ENCODE measurements at regions of chr3 and their contacts with region 1.

Region 1: DNA sequence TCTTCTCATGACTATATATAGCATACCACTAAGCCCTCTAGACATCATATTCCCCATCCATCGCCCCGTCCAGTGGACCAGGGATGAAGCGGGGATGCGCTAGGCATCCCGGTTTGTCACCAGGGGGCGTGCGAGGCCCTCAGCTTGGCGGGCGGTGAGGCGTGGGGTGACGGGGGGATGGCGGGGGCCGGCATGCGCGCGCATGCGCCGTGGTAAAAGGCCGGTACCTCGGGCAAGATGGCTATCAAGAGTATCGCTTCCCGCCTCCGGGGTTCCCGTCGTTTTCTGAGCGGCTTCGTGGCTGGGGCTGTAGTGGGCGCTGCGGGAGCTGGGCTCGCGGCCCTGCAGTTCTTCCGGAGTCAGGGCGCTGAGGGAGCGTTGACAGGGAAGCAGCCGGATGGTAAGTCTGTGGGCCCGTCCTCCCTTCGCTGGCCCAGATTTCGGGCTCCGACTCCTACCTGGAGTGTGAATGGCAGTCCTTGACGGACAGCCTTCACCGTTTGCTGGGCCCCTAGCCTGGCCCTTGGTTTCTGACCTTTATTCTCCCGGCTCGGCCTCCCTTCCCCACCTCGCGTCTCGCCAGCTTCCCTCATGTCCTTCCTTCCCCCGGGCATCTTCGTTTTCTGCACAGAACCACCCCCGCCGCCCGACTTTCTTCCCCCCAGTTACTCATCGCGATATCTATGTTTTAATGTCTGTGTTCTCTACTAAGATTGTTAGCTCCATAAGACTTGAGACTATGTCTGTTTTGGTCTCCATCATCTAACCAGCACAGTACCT is at the start of gene EXOG:
- DNase-seq: peak; percentile 94
- ATAC-seq: peak; percentile 89
- total RNA-seq, gene EXOG: 26.0 TPM

Region 2: GRCh38 chr3:38054291-38055001 is 441.9 kb before region 1 on chr3:
- intact Hi-C with region 1: no loop called
- DNase-seq: no peak
- ATAC-seq: no peak

Region 3: DNA sequence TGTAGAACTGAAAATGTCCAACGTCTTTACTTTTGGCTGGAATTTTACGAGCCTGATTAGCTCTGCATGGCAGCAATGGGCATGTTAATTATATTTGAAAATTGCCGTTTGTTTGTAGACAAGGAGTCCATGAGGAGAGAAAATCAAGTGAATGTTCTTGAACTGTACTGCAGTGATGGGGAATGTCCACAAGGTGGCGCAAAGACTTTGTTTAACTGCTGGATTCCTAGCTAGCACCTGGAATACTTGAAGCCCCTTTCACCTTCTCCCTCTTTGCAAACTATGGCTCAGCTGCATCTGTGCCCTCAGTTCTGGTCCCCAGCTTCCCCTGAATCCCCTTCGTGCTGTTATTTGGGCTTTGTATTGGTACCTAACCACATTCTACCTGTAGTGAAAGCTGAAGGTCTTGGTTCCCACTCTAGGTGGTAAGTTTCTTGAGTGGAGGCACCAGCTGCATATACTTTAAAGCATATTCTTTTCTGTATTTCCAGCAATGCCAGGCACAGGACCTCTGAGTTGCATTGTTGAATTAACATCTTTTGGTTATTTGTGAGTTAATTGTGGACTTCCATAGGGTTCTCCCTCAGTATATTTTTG is 25.2 kb after region 1 on chr3:
- intact Hi-C with region 1: loop called (anchors 2 kb)
- DNase-seq: no peak
- ATAC-seq: peak; percentile 57

Region 4: DNA sequence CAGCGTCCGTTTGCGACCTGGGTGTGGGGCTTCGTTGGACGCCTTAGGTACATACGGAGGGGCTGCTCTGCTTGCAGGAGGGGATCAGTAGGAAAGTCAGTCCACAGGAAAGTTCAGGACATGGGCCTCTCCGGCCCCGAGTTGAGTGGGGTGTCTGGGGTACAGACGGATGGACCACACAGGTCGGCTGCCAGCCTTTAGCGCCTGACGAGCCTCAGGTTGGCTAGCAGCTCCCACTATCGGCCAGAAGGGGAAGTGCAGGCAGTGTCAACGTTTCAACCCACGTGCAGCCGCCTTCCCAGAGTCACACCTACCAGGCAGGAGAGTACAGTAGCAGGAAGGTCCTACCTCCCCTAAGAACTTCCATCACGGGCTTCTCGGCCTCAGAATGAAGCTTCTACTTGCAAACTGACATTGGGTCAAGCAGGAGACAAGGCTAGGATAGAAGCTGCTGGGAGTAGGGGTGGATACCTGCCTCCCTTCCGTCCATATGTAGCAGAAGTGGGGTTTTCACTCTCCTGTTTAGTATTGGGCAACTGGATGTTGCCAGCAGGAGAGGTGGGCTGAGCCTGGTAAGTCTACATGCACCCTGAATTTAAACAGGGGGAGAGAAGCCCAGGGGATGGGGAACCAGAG is 155.0 kb after region 1 on chr3:
- intact Hi-C with region 1: loop called (anchors 2 kb)
- DNase-seq: peak; percentile 81
- ATAC-seq: peak; percentile 40

Region 5: GRCh38 chr3:38717355-38718240 is 221.3 kb after region 1 on chr3:
- intact Hi-C with region 1: loop called (anchors 5 kb)
- DNase-seq: peak; percentile 73
- ATAC-seq: peak; percentile 96

Measured in Right ventricle myocardium inferior (tissue), 1 donor.